ENCODE measurements at regions of chr15 and their contacts with region 1.

Region 1: DNA sequence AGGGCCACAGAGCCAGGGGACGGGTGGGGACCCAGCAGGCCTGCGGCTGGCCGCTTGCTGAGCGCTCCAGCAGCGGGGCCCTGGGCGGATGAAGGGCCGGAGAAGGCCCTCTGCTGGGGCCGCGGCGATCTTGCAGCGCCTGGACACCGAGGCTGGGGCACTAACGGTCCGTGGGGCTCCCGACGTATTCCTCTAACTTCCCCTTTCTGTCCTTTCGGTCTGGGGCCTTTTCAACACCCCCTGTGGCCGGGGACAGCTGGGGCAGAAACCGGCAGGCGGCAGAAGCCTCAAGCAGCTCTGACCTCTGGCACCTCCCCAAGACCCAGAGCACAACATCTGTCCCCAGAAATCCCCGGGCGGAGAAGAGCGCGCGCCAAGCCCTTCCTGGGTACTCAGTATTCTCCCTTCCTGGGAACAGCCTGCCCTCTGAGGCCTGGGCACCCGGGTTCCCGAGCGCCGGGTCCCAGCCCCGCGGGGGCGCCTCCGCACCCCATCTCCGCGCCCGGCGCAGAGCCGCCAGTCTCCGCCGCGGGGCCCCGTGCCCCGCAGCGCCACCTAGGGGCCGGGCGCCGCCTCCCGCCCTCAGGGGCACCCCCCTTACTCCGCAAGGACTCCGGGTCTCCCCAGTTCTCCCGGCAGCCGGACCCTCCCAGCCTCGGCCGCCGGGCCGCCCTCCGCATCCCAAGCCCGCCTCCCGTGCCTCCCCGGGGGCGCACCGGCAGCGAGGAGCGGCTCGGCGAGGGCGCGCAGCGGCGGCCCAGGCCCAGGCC is 582 bp upstream of the SLCO3A1 start:
- DNase-seq: peak; percentile 77 to 88 (median 82)
- H3K4me3 ChIP-seq: peak overlapping the region in 3 of 4 donors; percentile 36 to 95 (median 49)
- H3K27ac ChIP-seq: peak overlapping the region; percentile 56 to 95 (median 84)
- H3K4me1 ChIP-seq: peaks cover 10 to 26% of the 10 kb centered on the region in 2 donors
- H3K27me3 ChIP-seq: no peaks in the 10 kb centered on the region
- CTCF ChIP-seq: peak; percentile 39 to 87 (median 78)
- POLR2A ChIP-seq: peak in 1 of 2 donors; percentile 41

Region 2: DNA sequence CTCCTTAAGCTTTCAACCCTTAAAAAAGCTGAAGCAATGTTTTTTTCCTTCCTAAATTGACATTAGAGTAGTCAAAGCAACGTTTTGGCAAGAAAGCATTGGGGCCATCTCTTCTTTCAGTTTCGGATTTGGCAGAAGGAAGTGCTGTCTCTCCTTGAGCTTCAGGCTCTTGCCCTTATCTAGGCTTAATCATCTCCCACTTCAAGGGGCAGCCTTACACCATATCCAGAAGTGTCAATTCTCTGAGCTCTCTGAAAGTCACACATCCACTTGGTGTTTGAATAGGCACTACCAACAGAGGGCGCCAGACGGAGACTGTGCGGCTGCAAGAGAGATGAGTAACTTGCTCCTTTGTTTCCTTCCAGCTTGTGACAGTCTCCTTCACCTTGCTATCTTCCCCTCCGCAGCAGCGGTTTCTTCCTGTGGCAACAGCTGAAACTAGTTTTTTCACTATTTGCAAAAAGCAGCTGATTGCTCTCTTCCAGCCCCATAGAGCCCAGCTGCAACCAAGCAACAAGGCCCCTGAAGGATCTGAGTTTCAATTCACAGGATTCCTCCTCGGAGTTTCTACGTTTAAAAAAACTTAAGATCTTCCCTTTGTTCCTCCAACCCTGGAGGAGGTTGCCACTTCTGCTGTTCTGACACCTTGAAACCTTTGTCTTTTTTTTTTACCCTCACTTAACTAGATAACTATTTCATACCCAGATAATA is 146.4 kb before region 1 on chr15:
- intact Hi-C with region 1: loop called in 1 of 2 experiments (anchors 5 kb)
- DNase-seq: peak; percentile 80 to 94 (median 86)
- H3K4me3 ChIP-seq: no peak overlapping the region
- H3K27ac ChIP-seq: no peak overlapping the region
- H3K4me1 ChIP-seq: peaks cover 0 to 6% of the 10 kb centered on the region in 2 donors
- H3K27me3 ChIP-seq: no peaks in the 10 kb centered on the region
- CTCF ChIP-seq: peak; percentile 89 to 95 (median 92)
- POLR2A ChIP-seq: no peak

Region 3: DNA sequence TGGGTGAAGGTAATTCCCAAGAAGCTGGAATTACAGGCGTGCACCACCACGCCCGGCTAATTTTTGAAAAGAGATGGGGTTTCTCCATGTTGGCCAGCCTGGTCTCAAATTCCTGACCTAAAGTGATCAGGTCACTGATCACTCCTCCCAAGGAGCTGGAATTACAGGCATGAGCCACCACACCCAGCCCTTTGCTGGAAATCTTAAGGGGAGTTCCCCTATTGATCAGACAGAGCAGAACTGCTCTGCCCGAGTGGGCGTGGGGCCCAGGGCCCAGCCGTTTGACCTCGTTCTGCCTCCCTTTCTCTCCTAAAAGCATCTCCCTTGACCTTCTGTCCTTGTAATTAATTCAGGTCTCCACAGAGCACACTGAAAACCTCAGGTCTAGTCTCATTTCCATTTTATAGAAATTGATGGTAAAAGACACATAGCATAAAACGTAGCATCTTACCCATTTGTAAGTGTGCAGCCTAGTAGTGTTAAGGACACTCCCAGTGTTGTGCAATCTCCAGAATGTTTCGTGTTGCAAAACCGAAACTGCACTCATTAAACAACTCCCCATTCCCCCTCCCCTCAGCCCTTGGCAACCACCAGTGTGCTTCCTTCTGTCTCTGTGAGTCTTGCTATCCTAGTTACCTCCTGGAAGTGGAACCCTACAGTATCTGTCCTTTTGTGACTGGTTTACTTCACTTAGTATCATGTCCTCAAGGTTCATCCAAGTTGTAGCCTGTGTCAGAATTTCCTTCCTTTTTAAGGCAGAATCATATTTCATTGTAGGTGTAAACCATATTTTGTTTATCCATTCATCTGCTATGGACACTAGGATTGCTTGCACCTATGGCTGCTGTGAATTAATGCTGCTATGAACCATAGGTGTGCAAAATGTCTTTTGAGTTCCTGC is 90.0 kb after region 1 on chr15:
- intact Hi-C with region 1: loop called in 1 of 2 experiments (anchors 10 kb)
- DNase-seq: peak; percentile 77 to 94 (median 89)
- H3K4me3 ChIP-seq: no peak overlapping the region
- H3K27ac ChIP-seq: peak overlapping the region in 2 of 5 donors; percentile 27 to 72
- H3K4me1 ChIP-seq: peaks cover 12 to 53% of the 10 kb centered on the region in 2 donors
- H3K27me3 ChIP-seq: no peaks in the 10 kb centered on the region
- CTCF ChIP-seq: no peak
- POLR2A ChIP-seq: no peak

Measured in adrenal gland (tissue), 19 donors.